PC-3 (cell line): ENCODE measurements at regions of chr1 and their contacts with region 1.

Region 1: DNA sequence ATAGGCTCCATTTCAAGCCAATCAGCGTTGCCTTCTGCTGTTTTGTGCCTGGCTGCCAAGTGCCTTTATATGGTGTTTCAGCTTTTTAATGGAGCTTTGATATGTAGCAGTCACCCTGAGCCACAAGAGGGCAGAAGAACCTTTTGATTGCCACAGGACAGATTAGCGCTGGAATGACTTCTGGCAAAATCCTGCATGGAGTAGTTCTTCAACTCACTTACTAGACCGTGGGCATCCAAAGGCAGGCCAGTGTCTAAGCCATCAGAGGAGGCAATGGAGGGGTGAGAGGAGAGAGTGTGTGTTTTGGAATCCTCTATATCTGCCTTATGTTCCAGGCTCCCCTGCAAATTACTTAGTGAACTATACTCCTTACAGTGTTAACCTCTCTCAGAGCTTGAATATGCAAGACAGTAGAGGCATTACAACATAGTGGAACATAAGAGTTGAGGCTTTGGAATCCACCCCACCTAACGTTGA is 56.2 kb downstream of the ST3GAL3 start:
- DNase-seq: peak; percentile 93
- ATAC-seq: peak; percentile 99
- H3K4me3 ChIP-seq: no peak overlapping the region
- H3K27ac ChIP-seq: no peak overlapping the region
- H3K4me1 ChIP-seq: peaks cover 8% of the 10 kb centered on the region; the same call in 1 of the 2 replicates
- H3K27me3 ChIP-seq: no peaks in the 10 kb centered on the region
- CTCF ChIP-seq: peak; percentile 95

Region 2: GRCh38 chr1:43822040-43822439 is 58.5 kb after region 1 on chr1:
- CTCF ChIA-PET with region 1: no interaction called
- POLR2A ChIA-PET with region 1: no interaction called
- intact Hi-C with region 1: loop called (anchors 2 kb)
- DNase-seq: peak; percentile 95
- ATAC-seq: peak; percentile 94
- H3K4me3 ChIP-seq: peak overlapping the region; percentile 47
- H3K27ac ChIP-seq: peak overlapping the region; percentile 83
- H3K4me1 ChIP-seq: peaks cover 53% of the 10 kb centered on the region
- H3K27me3 ChIP-seq: no peaks in the 10 kb centered on the region
- CTCF ChIP-seq: no peak

Region 3: DNA sequence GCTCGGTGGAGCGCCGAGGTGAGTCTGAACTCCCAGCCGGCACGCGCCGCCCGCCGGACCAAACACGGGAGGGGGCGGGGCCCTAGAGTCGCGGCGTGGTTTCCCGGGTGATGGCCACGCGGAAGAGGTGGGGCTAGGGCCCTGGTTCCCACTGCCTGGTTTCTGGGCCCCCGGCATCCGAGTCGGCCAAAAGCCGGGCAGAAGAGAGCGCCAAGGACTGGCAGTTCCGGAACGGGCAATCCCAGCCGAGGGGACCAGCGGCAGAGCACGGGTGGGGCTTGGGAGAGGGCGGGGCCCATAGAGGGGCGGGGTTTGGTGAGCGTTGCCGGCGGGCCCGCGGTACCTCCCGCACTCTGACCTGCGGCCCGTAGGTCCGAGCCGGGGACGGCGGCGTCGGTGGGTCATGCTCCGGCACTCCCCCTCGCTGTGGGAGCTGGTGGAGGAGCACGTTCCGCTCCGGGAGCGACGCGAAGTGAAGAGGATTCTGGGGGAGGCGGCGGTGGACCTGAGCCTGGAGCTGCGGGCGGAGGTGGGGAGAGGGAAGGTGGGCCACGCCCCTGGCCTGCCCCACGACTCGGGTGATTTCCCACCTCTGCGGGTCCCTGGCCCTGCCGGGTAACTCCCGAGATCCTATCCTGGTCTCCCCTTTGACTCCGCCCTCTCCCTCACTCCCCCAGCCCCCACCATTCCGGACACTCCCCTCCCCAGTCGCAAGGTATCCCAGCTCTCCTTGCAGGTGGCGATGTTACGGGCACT is 228.1 kb after region 1 on chr1 and contains the start of gene CCDC24:
- CTCF ChIA-PET with region 1: no interaction called
- POLR2A ChIA-PET with region 1: no interaction called
- intact Hi-C with region 1: loop called (anchors 2 kb)
- DNase-seq: peak; percentile 87
- ATAC-seq: peak; percentile 80
- H3K4me3 ChIP-seq: peak within 1 kb of the TSS; percentile 72
- H3K27ac ChIP-seq: peak within 1 kb of the TSS; percentile 66
- H3K4me1 ChIP-seq: peaks cover 19% of the 10 kb centered on the region
- H3K27me3 ChIP-seq: no peaks in the 10 kb centered on the region
- CTCF ChIP-seq: no peak
- total RNA-seq, gene CCDC24: 10.1 and 21.9 TPM in 2 replicates